PC-3 (cell line): ENCODE measurements at regions of chr3 and their contacts with region 1.

Region 1: GRCh38 chr3:185824476-185825378 is at the start of gene IGF2BP2:
- DNase-seq: peak; percentile 81
- ATAC-seq: peak; percentile 68
- H3K4me3 ChIP-seq: peak within 1 kb of the TSS; percentile 85
- H3K27ac ChIP-seq: peak within 1 kb of the TSS; percentile 83
- H3K4me1 ChIP-seq: peaks cover 29% of the 10 kb centered on the region
- H3K27me3 ChIP-seq: no peaks in the 10 kb centered on the region
- CTCF ChIP-seq: no peak
- total RNA-seq, gene IGF2BP2: 81.2 and 105 TPM in 2 replicates

Region 2: GRCh38 chr3:185733980-185734724 is 90.6 kb before region 1 on chr3:
- CTCF ChIA-PET with region 1: interaction called, 6 read pairs
- POLR2A ChIA-PET with region 1: interaction called, 4 read pairs
- intact Hi-C with region 1: loop called (anchors 1 kb)
- DNase-seq: peak; percentile 91
- ATAC-seq: peak; percentile 39
- H3K4me3 ChIP-seq: no peak overlapping the region
- H3K27ac ChIP-seq: peak overlapping the region; percentile 100
- H3K4me1 ChIP-seq: peaks cover 90% of the 10 kb centered on the region
- H3K27me3 ChIP-seq: no peaks in the 10 kb centered on the region
- CTCF ChIP-seq: peak; percentile 86

Region 3: GRCh38 chr3:185764163-185764979 is 60.4 kb before region 1 on chr3:
- CTCF ChIA-PET with region 1: no interaction called
- POLR2A ChIA-PET with region 1: interaction called, 5 read pairs
- intact Hi-C with region 1: loop called (anchors 1 kb)
- DNase-seq: no peak
- ATAC-seq: no peak
- H3K4me3 ChIP-seq: no peak overlapping the region
- H3K27ac ChIP-seq: no peak overlapping the region
- H3K4me1 ChIP-seq: peaks cover 43% of the 10 kb centered on the region
- H3K27me3 ChIP-seq: no peaks in the 10 kb centered on the region
- CTCF ChIP-seq: no peak

Region 4: DNA sequence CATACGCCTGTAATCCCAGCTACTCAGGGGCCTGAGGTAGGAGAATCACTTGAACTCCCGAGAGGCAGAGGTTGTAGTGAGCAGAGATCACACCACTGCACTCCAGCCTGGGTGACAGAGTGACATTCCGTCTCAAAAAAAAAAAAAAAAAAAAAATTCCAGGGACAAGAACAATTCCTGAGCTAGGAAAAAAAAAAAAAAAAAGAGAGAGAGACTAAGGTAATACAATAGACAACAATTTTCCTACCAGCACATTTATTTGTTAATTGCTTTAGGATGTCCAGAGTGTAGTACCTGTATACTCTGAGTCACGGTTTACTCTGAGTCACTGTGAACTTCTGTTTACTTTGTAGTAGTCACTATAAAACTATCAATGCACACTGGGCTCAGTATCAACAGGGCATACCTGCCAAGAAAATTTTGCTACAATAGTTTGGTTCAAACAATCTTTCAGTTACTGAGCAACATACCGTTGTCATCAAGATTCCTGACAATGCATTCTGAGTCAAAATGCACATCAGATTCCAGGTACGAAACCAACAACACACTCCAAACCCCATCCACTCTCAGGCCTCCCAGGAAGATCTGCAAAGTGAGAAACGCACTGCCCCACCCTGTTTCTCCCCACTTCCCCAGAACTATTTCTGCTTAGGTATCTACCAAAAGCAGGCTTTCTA is 28.2 kb before region 1 on chr3:
- CTCF ChIA-PET with region 1: no interaction called
- POLR2A ChIA-PET with region 1: interaction called, 15 read pairs
- intact Hi-C with region 1: loop called (anchors 1 kb)
- DNase-seq: peak; percentile 100
- ATAC-seq: peak; percentile 88
- H3K4me3 ChIP-seq: peak overlapping the region; percentile 23; the same call in 1 of the 2 replicates
- H3K27ac ChIP-seq: peak overlapping the region; percentile 95
- H3K4me1 ChIP-seq: peaks cover 49% of the 10 kb centered on the region
- H3K27me3 ChIP-seq: no peaks in the 10 kb centered on the region
- CTCF ChIP-seq: no peak

Region 5: GRCh38 chr3:185937689-185938463 is 113.1 kb after region 1 on chr3 and contains the start of gene TRA2B:
- CTCF ChIA-PET with region 1: no interaction called
- POLR2A ChIA-PET with region 1: interaction called, 6 read pairs
- intact Hi-C with region 1: loop called (anchors 2 kb)
- DNase-seq: peak; percentile 98
- ATAC-seq: peak; percentile 84
- H3K4me3 ChIP-seq: peak within 1 kb of the TSS; percentile 89
- H3K27ac ChIP-seq: peak within 1 kb of the TSS; percentile 88
- H3K4me1 ChIP-seq: peaks cover 45% of the 10 kb centered on the region
- H3K27me3 ChIP-seq: no peaks in the 10 kb centered on the region
- CTCF ChIP-seq: peak; percentile 31
- total RNA-seq, gene TRA2B: 279 and 287 TPM in 2 replicates

Region 6: GRCh38 chr3:186815435-186815834 is 990.7 kb after region 1 on chr3:
- CTCF ChIA-PET with region 1: no interaction called
- POLR2A ChIA-PET with region 1: no interaction called
- intact Hi-C with region 1: no loop called
- DNase-seq: peak; percentile 69
- ATAC-seq: peak; percentile 88
- H3K4me3 ChIP-seq: no peak overlapping the region
- H3K27ac ChIP-seq: no peak overlapping the region
- H3K4me1 ChIP-seq: peaks cover 9% of the 10 kb centered on the region
- H3K27me3 ChIP-seq: no peaks in the 10 kb centered on the region
- CTCF ChIP-seq: no peak